G401 (cell line): ENCODE measurements at regions of chr11 and their contacts with region 1.

Region 1: GRCh38 chr11:118171269-118172062 is 5.0 kb downstream of the SCN2B start:
- DNase-seq: peak; percentile 87

Region 2: DNA sequence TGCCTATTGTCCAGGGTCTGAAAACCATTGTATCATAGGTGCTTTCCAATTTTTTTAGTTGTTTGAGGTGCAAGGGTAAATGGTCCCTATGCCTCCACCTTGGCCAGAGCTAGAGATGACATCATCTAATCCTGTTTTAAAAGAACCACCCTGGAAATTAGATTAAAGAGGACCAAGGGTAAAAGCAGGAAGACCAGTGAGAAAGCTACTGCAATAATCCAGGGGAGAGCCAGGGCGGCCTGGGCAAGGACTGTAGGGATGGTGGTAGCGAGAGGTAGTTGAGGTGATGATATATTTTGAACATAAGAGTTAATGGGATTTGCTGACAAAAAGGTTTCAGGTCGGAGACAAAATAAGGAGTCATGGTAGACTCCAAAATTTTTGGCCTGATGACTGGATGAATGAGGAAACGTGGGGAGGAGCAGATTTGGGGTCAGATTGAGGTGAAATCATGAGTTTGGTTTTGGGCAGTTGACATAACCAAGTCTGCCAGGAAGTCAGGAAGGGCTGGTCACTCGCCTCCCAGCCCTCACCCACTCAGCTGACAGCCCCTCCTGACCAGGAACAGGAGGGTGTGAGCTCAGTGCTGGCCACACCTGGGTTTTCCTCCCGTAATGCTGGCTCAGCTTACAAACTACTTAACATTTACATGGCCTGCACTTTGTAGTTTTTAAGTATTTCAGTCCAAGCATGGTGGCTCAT is 41.8 kb before region 1 on chr11:
- in situ Hi-C with region 1: loop called (anchors 5 kb)
- DNase-seq: no peak